Vagina (tissue), 2 donors: ENCODE measurements at regions of chr9 and their contacts with region 1.

Region 1: GRCh38 chr9:126500684-126501382 is 112.9 kb upstream of the LMX1B start:
- DNase-seq: no peak
- H3K4me3 ChIP-seq: no peak overlapping the region
- H3K27ac ChIP-seq: no peak overlapping the region
- H3K4me1 ChIP-seq: peaks cover 31% of the 10 kb centered on the region
- H3K27me3 ChIP-seq: no peaks in the 10 kb centered on the region
- CTCF ChIP-seq: peak; percentile 54 to 95 (median 94)
- POLR2A ChIP-seq: no peak

Region 2: GRCh38 chr9:126456441-126457174 is 44.2 kb before region 1 on chr9:
- intact Hi-C with region 1: no loop called
- DNase-seq: no peak
- H3K4me3 ChIP-seq: no peak overlapping the region
- H3K27ac ChIP-seq: no peak overlapping the region
- H3K4me1 ChIP-seq: no peaks in the 10 kb centered on the region
- H3K27me3 ChIP-seq: no peaks in the 10 kb centered on the region
- CTCF ChIP-seq: no peak
- POLR2A ChIP-seq: no peak

Region 3: GRCh38 chr9:126546036-126546435 is 45.2 kb after region 1 on chr9:
- intact Hi-C with region 1: no loop called
- DNase-seq: no peak
- H3K4me3 ChIP-seq: no peak overlapping the region
- H3K27ac ChIP-seq: no peak overlapping the region
- H3K4me1 ChIP-seq: no peaks in the 10 kb centered on the region
- H3K27me3 ChIP-seq: no peaks in the 10 kb centered on the region
- CTCF ChIP-seq: no peak
- POLR2A ChIP-seq: no peak

Region 4: GRCh38 chr9:126558051-126558665 is 57.3 kb after region 1 on chr9:
- intact Hi-C with region 1: loop called (anchors 5 kb)
- DNase-seq: no peak
- H3K4me3 ChIP-seq: no peak overlapping the region
- H3K27ac ChIP-seq: no peak overlapping the region
- H3K4me1 ChIP-seq: no peaks in the 10 kb centered on the region
- H3K27me3 ChIP-seq: no peaks in the 10 kb centered on the region
- CTCF ChIP-seq: peak; percentile 76 to 87 (median 86)
- POLR2A ChIP-seq: no peak